Transverse colon (tissue), 4 donors: ENCODE measurements at regions of chr2 and their contacts with region 1.

Region 1: GRCh38 chr2:225650041-225650440 is 250.5 kb downstream of the NYAP2 start:
- DNase-seq: no peak
- H3K4me3 ChIP-seq: no peak overlapping the region
- H3K27ac ChIP-seq: no peak overlapping the region
- H3K4me1 ChIP-seq: no peaks in the 10 kb centered on the region
- H3K27me3 ChIP-seq: no peaks in the 10 kb centered on the region
- CTCF ChIP-seq: no peak
- EP300 ChIP-seq: no peak
- POLR2A ChIP-seq: no peak

Region 2: DNA sequence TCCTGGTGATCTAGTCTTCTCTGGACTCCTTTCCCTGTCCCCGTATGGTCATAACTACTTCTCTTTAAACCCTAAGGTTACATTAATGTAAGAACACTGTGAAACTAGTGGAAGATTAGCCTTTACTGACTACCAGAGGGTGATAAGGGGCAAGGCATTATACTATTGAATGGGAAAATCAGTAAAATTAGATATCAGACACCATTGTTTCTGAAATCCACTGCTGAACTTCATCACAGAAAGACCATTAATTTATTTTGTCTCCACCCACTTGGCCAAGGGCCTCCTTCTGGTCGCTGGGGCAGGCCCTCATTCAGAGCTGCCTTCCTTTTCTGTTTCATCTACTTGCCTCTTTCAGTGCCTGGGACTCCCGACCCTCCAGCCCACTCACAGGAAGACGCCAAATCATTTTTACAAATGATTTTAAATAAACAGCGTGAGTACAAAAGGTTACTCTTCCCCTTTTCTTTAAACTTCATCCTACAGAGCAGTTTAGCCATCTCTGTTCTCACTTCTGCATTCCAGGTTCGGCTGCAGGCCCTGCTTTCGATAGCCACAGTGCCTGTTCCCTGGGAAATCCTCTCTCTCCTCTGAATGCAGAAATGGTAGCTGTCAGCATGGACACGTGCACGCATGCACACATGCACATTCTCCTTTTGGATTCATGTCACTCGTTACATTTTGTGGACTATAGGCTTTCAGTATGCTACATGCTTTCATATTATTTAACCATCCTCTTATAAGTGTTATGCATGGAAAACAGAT is 537.5 kb before region 1 on chr2:
- in situ Hi-C with region 1: loop called in 3 of 4 experiments (anchors 25 kb)
- intact Hi-C with region 1: loop called (anchors 10 kb)
- DNase-seq: peak; percentile 9
- H3K4me3 ChIP-seq: no peak overlapping the region
- H3K27ac ChIP-seq: no peak overlapping the region
- H3K4me1 ChIP-seq: no peaks in the 10 kb centered on the region
- H3K27me3 ChIP-seq: no peaks in the 10 kb centered on the region
- CTCF ChIP-seq: no peak
- EP300 ChIP-seq: no peak
- POLR2A ChIP-seq: no peak